ENCODE measurements at regions of chr5 and their contacts with region 1.

Region 1: DNA sequence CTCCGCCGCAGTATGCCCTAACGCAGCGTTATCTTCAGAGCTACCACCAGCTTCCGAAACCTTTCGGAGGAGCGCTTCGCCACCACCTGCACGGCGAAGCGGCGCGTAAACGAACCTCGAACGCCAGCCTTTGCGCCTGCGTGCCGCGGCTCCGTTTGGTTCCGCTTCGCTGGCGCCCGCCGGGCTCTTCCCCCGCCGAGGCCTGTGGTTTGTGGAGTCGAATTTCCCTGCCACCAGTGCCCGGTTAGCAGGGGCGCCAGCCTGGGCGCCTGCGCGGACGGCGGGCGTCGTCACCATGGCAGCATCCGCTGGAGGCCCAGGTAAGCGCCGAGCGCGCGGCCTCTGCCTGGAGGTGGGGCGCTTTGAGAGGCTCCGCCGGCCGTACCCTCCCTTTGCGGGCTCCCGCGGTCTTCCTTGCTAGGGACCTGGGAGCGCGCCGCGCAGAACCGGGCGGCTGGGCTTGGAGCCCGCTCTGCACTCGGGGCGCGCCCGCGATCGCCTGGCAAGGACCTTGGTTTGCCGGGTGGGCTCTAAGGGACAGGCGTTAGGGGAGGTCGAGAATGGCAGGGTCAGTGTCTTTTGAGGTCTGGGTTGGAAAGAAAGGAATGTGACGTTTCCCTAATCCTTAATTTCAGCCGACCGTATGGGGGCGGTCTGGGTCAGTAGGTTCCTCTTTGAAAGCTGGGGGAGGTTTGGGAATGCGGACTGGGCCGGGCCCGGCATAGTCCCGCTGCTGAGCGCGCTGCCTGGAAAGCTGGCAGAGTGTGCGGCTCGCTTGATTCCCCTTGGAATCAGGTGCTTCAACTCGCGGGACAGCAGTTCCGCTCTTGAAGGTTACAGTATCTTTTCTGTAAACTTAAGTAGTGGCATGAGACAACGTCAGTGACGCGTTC is at the start of gene FAM151B:
- DNase-seq: peak; percentile 93
- ATAC-seq: peak; percentile 93
- H3K4me3 ChIP-seq: peak within 1 kb of the TSS; percentile 58 to 72
- H3K27ac ChIP-seq: peak within 1 kb of the TSS; percentile 70
- H3K4me1 ChIP-seq: peaks cover 20 to 27% of the 10 kb centered on the region in 2 experiments
- H3K27me3 ChIP-seq: no peaks in the 10 kb centered on the region
- CTCF ChIP-seq: 0 out of 6 replicates have a peak, but pooled peaks of 1 of the 3 experiments have one; percentile 22
- POLR2A ChIP-seq: peak; percentile 55
- RAD21 ChIP-seq: peak; percentile 46; the same call in 1 of the 2 replicates
- total RNA-seq, gene FAM151B: 1.2 TPM

Region 2: DNA sequence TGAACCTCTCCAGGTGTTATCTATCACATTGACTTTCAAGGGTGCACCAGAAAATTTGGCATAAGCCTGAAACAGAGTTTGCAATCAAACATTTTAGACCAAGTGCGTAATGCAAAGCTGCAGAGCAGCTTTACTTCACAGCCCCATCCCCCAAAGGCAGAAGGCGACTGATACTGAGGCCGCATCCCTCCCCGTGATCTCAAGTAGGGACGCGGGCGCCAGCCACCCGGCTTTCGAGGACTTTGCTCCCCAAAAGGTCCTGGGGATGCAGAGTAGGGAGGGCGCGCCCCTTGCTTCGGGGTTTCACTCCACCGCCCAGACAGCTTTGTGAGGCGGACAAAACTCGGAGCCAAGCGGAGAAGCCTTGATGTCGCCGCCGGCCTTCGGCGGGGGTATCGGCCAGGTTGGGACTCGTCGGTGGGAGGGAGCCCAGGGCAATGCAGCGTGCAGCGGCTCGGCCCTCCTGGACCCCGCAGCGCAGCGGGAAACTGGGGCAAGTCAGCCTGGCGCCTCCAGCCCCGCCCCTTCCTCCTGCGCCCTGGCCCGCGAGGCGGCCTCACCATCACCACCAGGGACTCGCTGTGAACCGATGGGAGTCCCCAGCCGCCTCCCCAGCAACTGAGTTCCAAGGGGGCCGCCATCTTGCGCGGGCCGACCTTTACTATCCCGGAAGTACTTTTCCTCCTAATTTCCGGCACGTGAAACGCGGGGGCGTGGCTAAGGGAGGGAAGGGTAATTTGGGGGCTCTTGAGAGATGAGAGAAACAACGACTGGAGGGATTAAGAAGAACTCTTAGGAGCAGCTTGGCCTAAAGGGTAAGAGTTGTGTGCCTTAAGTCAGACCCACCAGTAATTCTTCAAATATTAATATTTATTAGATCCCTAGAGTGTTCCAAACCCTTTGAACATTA is 497.2 kb before region 1 on chr5 and contains the start of gene MTX3:
- CTCF ChIA-PET with region 1: no interaction called
- POLR2A ChIA-PET with region 1: no interaction called
- RAD21 ChIA-PET with region 1: no interaction called
- intact Hi-C with region 1: no loop called
- DNase-seq: peak; percentile 61
- ATAC-seq: peak; percentile 97
- H3K4me3 ChIP-seq: peak within 1 kb of the TSS; percentile 83 to 89
- H3K27ac ChIP-seq: peak within 1 kb of the TSS; percentile 93
- H3K4me1 ChIP-seq: peaks cover 8 to 17% of the 10 kb centered on the region in 2 experiments; a peak in 3 of 4 replicates
- H3K27me3 ChIP-seq: no peaks in the 10 kb centered on the region
- CTCF ChIP-seq: no peak
- POLR2A ChIP-seq: peak; percentile 25
- RAD21 ChIP-seq: no peak
- total RNA-seq, gene MTX3: 34.9 TPM

Region 3: DNA sequence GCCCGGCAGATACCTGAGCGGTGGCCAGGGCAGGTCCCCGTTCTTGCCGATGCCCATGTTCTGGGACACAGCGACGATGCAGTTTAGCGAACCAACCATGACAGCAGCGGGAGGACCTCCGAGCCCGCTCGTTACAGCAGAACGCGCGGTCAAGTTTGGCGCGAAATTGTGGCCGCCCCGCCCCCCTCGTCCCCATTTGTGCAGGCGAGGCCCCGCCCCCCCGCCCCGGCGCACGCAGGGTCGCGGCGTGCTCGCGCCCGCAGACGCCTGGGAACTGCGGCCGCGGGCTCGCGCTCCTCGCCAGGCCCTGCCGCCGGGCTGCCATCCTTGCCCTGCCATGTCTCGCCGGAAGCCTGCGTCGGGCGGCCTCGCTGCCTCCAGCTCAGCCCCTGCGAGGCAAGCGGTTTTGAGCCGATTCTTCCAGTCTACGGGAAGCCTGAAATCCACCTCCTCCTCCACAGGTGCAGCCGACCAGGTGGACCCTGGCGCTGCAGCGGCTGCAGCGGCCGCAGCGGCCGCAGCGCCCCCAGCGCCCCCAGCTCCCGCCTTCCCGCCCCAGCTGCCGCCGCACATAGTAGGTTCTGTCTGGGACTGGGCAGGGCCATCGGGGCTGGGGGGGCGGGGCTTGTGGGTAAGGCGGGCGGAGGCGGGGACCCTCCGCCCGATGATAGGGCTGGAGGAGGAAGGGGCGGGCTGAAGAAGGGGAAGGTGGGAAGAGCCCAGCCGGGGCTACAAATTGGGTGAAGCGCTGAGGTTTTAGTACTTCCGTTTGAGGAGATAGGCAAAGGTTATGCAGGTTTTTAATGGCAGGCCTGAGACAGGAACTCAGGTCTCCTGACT is 166.5 kb after region 1 on chr5 and contains the starts of genes DHFR and MSH3:
- CTCF ChIA-PET with region 1: no interaction called
- POLR2A ChIA-PET with region 1: no interaction called
- RAD21 ChIA-PET with region 1: no interaction called
- intact Hi-C with region 1: loop called (anchors 5 kb)
- DNase-seq: peak; percentile 85
- ATAC-seq: peak; percentile 75
- H3K4me3 ChIP-seq: peak within 1 kb of the TSS; percentile 64 to 83
- H3K27ac ChIP-seq: peak within 1 kb of the TSS; percentile 86
- H3K4me1 ChIP-seq: peaks cover 6 to 21% of the 10 kb centered on the region in 2 experiments; a peak in 3 of 4 replicates
- H3K27me3 ChIP-seq: no peaks in the 10 kb centered on the region
- CTCF ChIP-seq: peak in 2 of 3 experiments; percentile 42 to 43; a peak in 4 of 6 replicates
- POLR2A ChIP-seq: peak; percentile 84
- RAD21 ChIP-seq: no peak
- total RNA-seq, gene DHFR: 58.7 TPM
- total RNA-seq, gene MSH3: 4.9 TPM